ENCODE measurements at regions of chr7 and their contacts with region 1.

Region 1: DNA sequence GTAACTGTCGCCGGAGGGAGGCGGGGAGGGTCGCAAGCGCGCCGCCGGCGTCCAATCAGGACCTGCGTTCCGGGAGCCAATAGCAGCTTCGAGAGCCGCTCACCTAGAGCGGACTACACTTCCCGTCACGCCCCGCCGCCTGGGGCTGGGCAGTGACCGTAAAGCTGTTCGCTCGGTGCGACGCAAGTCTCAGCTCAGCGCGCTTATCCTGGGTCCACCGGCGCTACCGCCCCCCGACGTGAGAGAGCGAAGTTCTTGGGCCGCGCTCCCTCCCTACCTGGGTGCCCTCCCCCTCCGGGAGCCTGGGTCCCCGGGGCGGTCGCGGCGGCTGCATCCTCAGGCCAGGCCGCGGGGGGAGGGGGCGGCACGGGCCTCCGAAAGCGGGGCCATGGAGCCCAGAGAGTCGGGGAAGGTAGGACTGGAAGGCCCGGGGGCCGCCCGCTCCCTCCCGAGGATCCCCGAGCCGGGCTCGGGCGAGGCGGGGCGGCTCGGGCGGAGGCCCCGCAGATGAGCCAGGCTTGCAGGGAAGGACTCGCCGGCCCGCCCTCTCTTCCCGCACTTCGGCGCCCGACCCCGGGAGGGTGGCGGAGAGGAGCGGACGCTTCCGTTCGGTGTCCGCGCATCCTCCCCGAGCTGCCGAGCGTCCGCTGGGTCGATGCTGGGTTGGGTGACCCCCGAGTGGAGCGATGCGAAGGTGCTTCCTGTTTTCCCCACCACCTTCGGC is at the start of gene ZNF862:
- DNase-seq: peak; percentile 89 to 99 (median 96)
- ATAC-seq: peak; percentile 97
- H3K4me3 ChIP-seq: peak within 1 kb of the TSS; percentile 65 to 76
- H3K4me3 Mint-ChIP-seq: peak within 1 kb of the TSS; percentile 94
- H3K27ac ChIP-seq: peak within 1 kb of the TSS; percentile 43 to 46
- H3K27ac Mint-ChIP-seq: peak within 1 kb of the TSS; percentile 93
- H3K4me1 ChIP-seq: peaks cover 17% of the 10 kb centered on the region
- H3K4me1 Mint-ChIP-seq: peaks cover 48% of the 10 kb centered on the region
- H3K27me3 ChIP-seq: no peaks in the 10 kb centered on the region
- H3K27me3 Mint-ChIP-seq: no peaks in the 10 kb centered on the region
- CTCF ChIP-seq: no peak
- total RNA-seq, gene ZNF862: 18.8 TPM

Region 2: DNA sequence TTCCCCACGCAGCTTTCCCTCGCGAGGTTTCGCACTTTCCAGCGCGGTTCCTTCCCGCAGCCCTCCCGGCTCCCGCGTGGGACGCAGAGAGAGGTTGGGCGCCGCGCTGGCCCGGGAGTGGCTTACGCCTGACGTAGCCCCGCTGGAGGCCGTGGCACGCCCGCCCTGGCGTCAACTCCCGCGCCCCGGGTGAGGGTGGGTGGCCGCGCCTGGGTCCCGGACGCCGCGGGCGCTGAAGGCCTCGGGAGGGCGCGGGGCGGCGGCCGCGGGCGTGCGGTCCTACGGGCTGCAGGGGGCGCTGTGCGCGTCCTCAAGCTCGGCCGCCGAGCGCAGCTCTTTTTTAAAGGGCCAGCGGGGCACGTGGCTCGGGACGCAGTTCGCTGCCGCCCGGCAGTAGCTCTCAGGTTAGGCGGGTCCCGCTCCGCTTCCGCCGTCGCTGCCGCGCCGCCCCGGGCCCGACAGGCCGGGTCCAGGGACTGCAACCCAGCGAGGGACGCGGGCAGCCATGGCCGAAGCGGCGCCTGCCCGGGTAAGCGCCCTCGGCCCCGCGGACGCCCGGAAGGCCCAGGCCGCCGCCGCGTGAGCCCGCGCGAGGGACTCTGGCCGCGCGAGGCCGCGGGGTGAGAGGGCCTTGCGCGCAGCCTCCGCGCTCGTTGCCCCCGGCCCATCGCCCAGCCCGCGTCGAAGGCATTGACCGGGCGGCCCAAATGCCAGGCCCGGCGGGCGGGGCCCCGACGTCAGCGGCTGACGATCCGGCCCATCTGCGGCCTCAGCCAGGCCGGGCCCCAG is 576.4 kb before region 1 on chr7 and contains the start of gene ZNF783:
- CTCF ChIA-PET with region 1: no interaction called
- POLR2A ChIA-PET with region 1: no interaction called
- intact Hi-C with region 1: loop called in 1 of 2 experiments (anchors 10 kb)
- DNase-seq: peak; percentile 68 to 96 (median 83)
- ATAC-seq: peak; percentile 93
- H3K4me3 ChIP-seq: peak within 1 kb of the TSS; percentile 69
- H3K4me3 Mint-ChIP-seq: peak within 1 kb of the TSS; percentile 86
- H3K27ac ChIP-seq: peak within 1 kb of the TSS; percentile 50 to 83
- H3K27ac Mint-ChIP-seq: peak within 1 kb of the TSS; percentile 94
- H3K4me1 ChIP-seq: peaks cover 30% of the 10 kb centered on the region
- H3K4me1 Mint-ChIP-seq: peaks cover 37% of the 10 kb centered on the region
- H3K27me3 ChIP-seq: no peaks in the 10 kb centered on the region
- H3K27me3 Mint-ChIP-seq: no peaks in the 10 kb centered on the region
- CTCF ChIP-seq: peak; percentile 87
- total RNA-seq, gene ZNF783: 24.0 to 27.3 TPM

Region 3: DNA sequence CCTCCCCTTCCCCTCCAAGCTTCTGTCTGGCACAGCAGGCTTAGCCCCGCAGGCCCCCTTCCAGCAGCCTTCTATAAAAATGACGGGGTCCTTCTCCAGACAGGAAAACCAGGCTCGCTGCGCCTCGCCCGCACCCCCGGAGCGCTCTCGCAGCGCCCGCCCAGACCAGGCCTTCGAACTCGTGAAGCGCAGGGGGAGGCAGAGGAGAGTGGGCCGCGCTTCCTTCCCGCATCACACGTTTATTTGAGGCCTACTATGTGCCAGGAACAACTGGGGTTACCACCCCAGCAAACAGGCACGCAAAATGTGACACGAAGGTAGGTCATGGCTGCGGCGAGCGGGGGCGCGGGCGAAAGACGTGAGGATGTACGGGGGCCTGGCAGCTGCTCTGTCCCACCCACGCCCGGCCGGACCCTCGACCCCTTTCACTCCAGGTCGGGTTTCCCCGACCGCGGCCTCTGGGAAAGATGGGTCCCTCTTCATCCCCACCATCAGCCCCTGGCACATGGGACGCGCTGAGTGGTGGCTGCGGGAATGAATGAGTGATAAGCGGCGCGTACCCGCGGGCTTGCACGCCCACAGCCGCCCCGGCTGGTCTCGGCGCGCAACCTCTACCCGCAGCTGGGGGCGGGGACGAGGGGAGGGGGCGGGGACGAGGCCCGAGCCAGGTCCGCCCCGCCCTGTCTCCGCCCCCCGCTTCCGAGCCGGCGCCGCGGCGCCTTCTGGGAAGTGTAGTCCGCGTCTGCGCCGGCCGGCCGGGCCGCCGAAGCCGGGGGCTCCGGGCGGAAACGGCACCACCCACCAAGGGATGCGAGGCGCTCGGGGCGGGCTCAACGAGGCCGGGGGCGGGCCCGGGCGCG is 124.1 kb before region 1 on chr7:
- CTCF ChIA-PET with region 1: no interaction called
- POLR2A ChIA-PET with region 1: no interaction called
- intact Hi-C with region 1: loop called in 1 of 2 experiments (anchors 1 kb)
- DNase-seq: peak; percentile 86 to 97 (median 94)
- ATAC-seq: peak; percentile 95
- H3K4me3 ChIP-seq: peak overlapping the region; percentile 65 to 68
- H3K4me3 Mint-ChIP-seq: peak overlapping the region; percentile 80
- H3K27ac ChIP-seq: peak overlapping the region; percentile 12
- H3K27ac Mint-ChIP-seq: peak overlapping the region; percentile 22
- H3K4me1 ChIP-seq: peaks cover 18% of the 10 kb centered on the region
- H3K4me1 Mint-ChIP-seq: peaks cover 23% of the 10 kb centered on the region
- H3K27me3 ChIP-seq: no peaks in the 10 kb centered on the region
- H3K27me3 Mint-ChIP-seq: no peaks in the 10 kb centered on the region
- CTCF ChIP-seq: no peak

Region 4: DNA sequence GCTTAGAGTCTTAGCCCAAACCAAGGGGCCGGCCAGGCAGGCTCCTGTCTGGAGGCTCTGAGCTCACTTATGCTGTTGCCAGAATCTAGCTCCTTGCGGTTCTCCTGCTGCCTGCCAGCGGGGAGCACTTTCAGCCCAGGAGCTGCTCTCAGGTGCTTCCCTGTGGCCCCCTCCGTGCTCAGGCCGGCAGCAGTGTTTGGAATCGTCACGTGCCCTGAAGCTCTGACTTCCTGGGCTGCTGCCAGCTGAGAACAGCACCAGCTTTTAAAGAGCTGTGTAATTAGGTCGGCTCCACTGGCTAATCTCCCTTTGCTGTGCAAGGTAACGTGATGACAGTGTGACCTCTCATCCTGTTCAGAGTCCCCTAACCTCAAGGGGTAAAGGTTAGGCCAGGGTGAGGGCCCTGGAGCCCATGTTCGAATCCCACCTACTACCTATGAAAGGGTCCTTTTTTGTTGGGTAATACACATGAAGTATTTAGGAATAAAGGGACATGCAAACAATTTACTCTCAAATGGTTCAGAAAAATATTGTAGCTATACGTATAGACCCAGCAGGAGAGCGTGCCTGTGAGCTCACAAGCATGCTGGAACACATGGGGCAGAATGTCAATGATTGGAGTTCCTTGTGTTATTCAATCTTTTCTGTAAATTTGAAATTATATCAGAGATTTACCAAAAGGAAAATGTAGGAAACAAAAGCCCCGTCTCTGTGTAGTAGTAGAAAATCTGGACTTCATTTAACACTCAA is 16.4 kb after region 1 on chr7:
- CTCF ChIA-PET with region 1: interaction called, 4 read pairs
- POLR2A ChIA-PET with region 1: interaction called, 8 read pairs
- intact Hi-C with region 1: loop called in 1 of 2 experiments (anchors 2 kb)
- DNase-seq: peak in 3 of 9 experiments; percentile 44 to 56 (median 45)
- ATAC-seq: peak; percentile 55
- H3K4me3 ChIP-seq: no peak overlapping the region
- H3K4me3 Mint-ChIP-seq: peak overlapping the region; percentile 29
- H3K27ac ChIP-seq: no peak overlapping the region
- H3K27ac Mint-ChIP-seq: peak overlapping the region; percentile 77
- H3K4me1 ChIP-seq: peaks cover 48% of the 10 kb centered on the region
- H3K4me1 Mint-ChIP-seq: peaks cover 58% of the 10 kb centered on the region
- H3K27me3 ChIP-seq: no peaks in the 10 kb centered on the region
- H3K27me3 Mint-ChIP-seq: no peaks in the 10 kb centered on the region
- CTCF ChIP-seq: no peak

Region 5: DNA sequence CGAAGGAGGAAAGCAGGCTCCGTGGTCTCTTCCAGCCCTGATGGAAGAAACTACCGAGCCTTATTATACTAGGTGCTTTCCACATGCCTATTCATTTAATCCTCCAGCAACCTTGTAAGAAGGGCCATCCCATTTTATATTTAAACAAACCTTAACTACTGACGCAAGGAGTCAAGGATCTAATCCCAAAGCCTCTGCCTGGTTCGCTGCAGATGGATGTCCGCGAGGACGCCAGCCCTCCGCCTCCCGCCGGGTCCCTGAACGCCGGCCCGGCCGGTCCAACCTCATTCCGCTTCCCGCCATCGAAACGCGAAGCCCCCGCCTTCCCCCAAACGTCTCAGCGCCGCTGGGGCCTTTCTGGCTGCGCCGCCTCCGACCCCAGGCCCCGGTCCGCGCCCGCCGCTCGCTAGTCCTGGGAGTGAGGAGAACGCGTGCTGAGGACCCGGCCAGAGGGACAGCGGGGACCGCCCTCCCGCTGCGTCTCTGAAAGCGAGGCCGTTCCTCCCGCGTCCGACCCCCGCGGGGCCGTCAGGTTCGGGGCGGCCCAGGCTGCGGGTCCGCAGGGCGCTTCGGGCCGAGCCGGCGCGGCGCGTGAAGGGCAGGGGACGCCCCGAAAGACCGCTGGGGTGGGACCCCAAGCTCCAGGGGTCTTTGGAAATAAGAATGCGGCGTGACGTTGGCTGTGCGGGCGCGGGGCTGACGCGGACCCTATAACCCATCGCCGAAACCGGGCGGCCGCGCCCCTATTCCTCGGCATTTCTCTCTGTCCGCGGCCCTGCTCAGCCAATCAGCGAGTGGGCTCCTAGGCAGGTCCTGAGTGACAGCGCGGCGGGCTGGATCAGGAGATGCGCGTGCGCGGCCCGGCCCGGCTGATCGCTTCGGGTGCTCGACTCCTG is 34.9 kb after region 1 on chr7 and contains the start of gene ATP6V0E2:
- CTCF ChIA-PET with region 1: interaction called, 7 read pairs
- POLR2A ChIA-PET with region 1: interaction called, 51 read pairs
- intact Hi-C with region 1: loop called (anchors 1 kb)
- DNase-seq: peak; percentile 72 to 95 (median 90)
- ATAC-seq: peak; percentile 73
- H3K4me3 ChIP-seq: peak within 1 kb of the TSS; percentile 70 to 80
- H3K4me3 Mint-ChIP-seq: peak within 1 kb of the TSS; percentile 92
- H3K27ac ChIP-seq: peak within 1 kb of the TSS; percentile 63 to 66
- H3K27ac Mint-ChIP-seq: peak within 1 kb of the TSS; percentile 90
- H3K4me1 ChIP-seq: peaks cover 68% of the 10 kb centered on the region
- H3K4me1 Mint-ChIP-seq: peaks cover 84% of the 10 kb centered on the region
- H3K27me3 ChIP-seq: no peaks in the 10 kb centered on the region
- H3K27me3 Mint-ChIP-seq: no peaks in the 10 kb centered on the region
- CTCF ChIP-seq: no peak
- total RNA-seq, gene ATP6V0E2: 32.9 to 33.5 TPM

Region 6: DNA sequence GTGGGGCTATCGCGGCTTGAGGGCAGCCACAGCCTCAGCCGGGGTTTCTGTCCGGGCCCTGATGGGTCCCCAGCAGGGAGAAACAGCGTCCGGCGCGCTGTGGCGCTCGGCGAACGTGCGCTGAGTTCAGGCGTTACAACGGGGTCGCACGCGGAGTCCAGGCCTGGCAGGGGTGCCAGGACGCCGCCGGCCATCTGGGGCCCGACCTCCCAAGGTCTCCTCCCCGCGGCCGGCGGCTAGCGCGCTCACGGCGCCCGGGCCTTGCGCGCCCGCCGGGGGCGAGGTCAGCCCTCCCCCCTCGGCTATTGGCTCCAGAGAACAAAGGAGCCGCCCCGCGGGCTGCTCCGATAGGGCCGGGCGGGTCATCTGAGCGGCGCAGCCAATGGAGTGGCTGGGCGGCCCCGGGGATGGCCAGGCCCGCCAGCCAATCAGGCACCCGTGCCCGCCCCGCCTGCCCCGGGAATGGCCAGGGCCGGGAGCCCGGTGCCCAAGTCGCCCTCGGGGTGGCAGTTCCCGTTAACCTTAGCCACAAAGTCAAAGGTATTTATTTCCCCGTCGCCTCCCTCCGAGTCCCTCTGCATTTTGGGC is 540.6 kb after region 1 on chr7 and contains the start of gene ZNF775:
- CTCF ChIA-PET with region 1: no interaction called
- POLR2A ChIA-PET with region 1: no interaction called
- intact Hi-C with region 1: loop called in 1 of 2 experiments (anchors 5 kb)
- DNase-seq: peak; percentile 82 to 95 (median 91)
- ATAC-seq: peak; percentile 93
- H3K4me3 ChIP-seq: peak within 1 kb of the TSS; percentile 83 to 84
- H3K4me3 Mint-ChIP-seq: peak within 1 kb of the TSS; percentile 86
- H3K27ac ChIP-seq: peak within 1 kb of the TSS; percentile 10 to 48
- H3K27ac Mint-ChIP-seq: peak within 1 kb of the TSS; percentile 93
- H3K4me1 ChIP-seq: peaks cover 37% of the 10 kb centered on the region
- H3K4me1 Mint-ChIP-seq: peaks cover 53% of the 10 kb centered on the region
- H3K27me3 ChIP-seq: no peaks in the 10 kb centered on the region
- H3K27me3 Mint-ChIP-seq: no peaks in the 10 kb centered on the region
- CTCF ChIP-seq: no peak
- total RNA-seq, gene ZNF775: 0.33 to 0.58 TPM

Region 7: DNA sequence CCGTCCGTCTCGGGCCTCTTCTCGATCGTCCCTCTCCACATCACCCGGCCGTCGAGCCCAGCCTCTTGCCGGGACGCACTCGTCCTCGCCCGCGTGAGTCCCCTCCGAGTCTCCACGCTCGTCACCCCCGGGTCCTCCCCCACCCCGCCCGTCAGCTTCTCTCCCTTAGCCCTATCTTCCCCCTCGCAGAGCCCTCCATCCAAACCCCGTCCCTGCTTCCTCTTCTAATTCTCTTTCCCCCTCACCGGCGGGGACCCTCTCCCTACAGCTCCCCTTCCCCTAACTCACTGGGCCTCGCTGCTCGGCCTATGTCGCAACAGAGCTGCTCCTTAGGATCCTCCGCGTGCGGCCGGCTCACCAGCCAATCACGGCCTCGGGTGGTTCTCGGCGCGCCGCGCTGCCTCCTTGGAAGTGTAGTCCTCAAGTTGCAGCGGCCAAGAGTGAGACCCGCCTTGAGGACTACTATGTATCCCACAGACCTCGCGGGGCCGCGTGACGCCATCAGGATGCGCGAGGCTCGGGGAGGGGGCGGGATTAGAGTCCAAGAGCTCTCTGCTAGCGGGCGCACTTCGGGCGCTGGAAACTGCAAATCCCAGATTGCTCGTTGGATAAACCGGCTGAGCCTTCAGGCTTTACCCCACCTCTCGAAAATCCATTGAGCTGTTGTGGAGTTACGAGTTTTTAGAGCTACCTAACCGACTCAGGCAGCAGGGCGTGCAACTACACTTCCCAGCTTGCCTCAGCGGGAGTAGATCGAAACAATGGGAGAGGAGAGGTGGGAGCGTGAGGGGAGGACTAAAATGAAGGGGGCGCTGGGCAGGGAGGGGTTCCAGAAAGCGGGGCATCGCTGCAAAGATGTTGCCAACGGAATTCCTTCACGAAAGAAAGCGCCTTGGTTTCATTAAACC is 1388.7 kb after region 1 on chr7 and contains the start of gene ABCF2:
- CTCF ChIA-PET with region 1: no interaction called
- POLR2A ChIA-PET with region 1: no interaction called
- intact Hi-C with region 1: loop called (anchors 2 to 10 kb)
- DNase-seq: peak; percentile 94 to 99 (median 98)
- ATAC-seq: peak; percentile 98
- H3K4me3 ChIP-seq: peak within 1 kb of the TSS; percentile 69 to 84
- H3K4me3 Mint-ChIP-seq: peak within 1 kb of the TSS; percentile 100
- H3K27ac ChIP-seq: peak within 1 kb of the TSS; percentile 67 to 79
- H3K27ac Mint-ChIP-seq: peak within 1 kb of the TSS; percentile 97
- H3K4me1 ChIP-seq: peaks cover 27% of the 10 kb centered on the region
- H3K4me1 Mint-ChIP-seq: peaks cover 48% of the 10 kb centered on the region
- H3K27me3 ChIP-seq: no peaks in the 10 kb centered on the region
- H3K27me3 Mint-ChIP-seq: no peaks in the 10 kb centered on the region
- CTCF ChIP-seq: no peak
- total RNA-seq, gene ABCF2: 12.7 to 16.5 TPM

Measured in CD8-positive, alpha-beta T cell (primary cell).